ENCODE measurements at regions of chr1 and their contacts with region 1.

Region 1: DNA sequence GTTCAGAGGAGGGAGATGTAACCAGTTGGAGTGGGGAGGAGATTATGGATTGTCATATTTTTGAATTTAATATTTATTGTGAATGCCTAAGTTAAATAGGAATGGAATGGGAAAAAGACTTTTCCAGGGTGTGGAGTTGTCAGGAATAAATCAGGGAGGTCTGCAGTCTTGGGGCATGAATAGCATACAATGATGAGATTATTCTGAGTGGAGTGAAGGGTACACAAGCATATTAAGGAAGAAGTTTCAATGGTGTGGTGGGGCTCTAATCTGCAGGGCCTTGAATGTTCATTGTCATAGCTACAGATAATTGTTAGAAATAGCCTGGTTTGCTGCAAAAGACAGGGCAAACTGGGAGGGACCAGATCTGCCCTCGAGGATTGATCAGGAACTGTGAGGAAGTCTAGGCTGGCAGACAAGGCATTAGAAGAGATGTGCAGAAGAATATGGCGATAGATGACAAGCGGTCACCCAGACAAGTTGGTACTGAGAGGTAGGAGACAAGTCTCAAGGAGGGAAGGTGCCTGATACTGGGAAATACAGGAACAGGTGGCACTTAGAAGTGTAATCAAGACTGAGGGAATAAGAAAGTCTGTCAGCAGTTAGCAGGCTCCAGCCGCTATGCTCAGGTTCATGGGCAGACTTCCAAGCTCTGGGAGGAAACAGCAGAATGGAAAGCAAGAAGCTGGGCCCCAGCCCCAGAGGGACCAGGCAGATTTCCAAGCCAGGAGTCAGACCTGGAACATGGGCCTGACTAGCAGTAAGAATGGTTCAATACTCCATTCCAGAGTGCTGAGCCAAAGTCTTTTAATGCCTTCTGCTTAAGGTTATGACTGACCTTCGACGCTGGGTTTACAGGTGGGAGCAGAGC is 20.9 kb upstream of the RGL1 start:
- DNase-seq: no peak

Region 2: DNA sequence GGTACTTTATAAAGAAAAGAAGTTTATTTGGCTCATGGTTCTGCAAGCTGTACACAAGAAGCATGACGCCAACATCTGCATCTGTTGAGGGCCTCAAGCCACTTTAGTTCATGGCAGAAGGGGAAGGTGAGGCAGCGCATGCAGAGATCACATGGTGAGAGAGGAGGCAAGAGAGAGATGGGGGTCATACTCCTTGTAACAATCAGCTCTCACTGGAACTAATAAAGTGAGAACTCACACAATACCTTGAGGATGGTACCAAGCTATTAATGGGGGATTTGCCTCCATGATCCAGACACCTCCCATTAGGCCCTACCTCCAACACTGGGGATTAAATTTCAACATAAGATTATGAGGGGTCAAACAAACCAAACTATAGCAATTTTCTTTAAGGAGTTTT is 17.6 kb after region 1 on chr1:
- intact Hi-C with region 1: loop called in 1 of 2 experiments (anchors 1 kb)
- DNase-seq: no peak

Region 3: GRCh38 chr1:183859831-183860230 is 75.8 kb after region 1 on chr1:
- intact Hi-C with region 1: no loop called
- DNase-seq: no peak

Region 4: GRCh38 chr1:184255560-184255959 is 471.6 kb after region 1 on chr1:
- intact Hi-C with region 1: loop called in 1 of 2 experiments (anchors 5 kb)
- DNase-seq: no peak